Natural killer cell (primary cell): ENCODE measurements at regions of chr18 and their contacts with region 1.

Region 1: GRCh38 chr18:46073474-46074331 is 1.6 kb upstream of the PSTPIP2 start:
- DNase-seq: peak in 1 of 2 donors; percentile 85
- ATAC-seq: peak; percentile 54 to 58 (median 56)
- H3K4me3 ChIP-seq: no peak overlapping the region
- H3K4me3 Mint-ChIP-seq: peak overlapping the region; percentile 62
- H3K27ac ChIP-seq: no peak overlapping the region
- H3K27ac Mint-ChIP-seq: peak overlapping the region; percentile 13 to 61
- H3K4me1 ChIP-seq: peaks cover 34% of the 10 kb centered on the region
- H3K4me1 Mint-ChIP-seq: peaks cover 35 to 43% of the 10 kb centered on the region in 2 donors
- H3K27me3 ChIP-seq: peaks cover 2% of the 10 kb centered on the region
- H3K27me3 Mint-ChIP-seq: no peaks in the 10 kb centered on the region
- CTCF ChIP-seq: peak; percentile 79

Region 2: DNA sequence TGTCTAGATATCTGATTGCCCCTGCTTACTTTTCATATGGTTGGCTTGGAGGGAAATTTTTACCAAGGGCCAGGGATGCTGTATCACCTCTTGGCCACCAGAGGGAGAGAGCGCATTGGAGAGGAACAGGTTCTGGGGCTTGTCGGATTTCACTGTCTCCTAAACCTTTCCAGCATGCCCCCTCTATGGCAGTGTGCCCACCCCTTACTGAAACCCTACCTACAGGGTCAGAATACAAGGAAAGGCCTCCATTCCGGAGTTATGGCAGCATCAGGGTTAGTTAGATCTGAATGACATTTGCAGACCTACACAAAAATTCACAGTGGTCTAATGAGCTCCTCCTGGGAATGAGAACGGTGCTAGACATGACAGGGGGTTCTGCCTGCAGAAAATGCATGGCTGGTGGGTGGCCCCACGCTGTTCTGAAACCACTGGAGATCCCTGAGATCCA is 452.6 kb before region 1 on chr18:
- intact Hi-C with region 1: loop called (anchors 2 kb)
- DNase-seq: peak; percentile 18 to 69
- ATAC-seq: peak; percentile 61 to 84 (median 76)
- H3K4me3 ChIP-seq: no peak overlapping the region
- H3K4me3 Mint-ChIP-seq: no peak overlapping the region
- H3K27ac ChIP-seq: no peak overlapping the region
- H3K27ac Mint-ChIP-seq: no peak overlapping the region
- H3K4me1 ChIP-seq: no peaks in the 10 kb centered on the region
- H3K4me1 Mint-ChIP-seq: peaks cover 0 to 6% of the 10 kb centered on the region in 2 donors
- H3K27me3 ChIP-seq: no peaks in the 10 kb centered on the region
- H3K27me3 Mint-ChIP-seq: peaks cover 17 to 23% of the 10 kb centered on the region in 2 donors
- CTCF ChIP-seq: peak; percentile 94

Region 3: GRCh38 chr18:45910405-45911023 is 163.2 kb before region 1 on chr18:
- intact Hi-C with region 1: loop called (anchors 5 kb)
- DNase-seq: peak; percentile 44 to 75
- ATAC-seq: peak; percentile 82 to 94 (median 83)
- H3K4me3 ChIP-seq: no peak overlapping the region
- H3K4me3 Mint-ChIP-seq: no peak overlapping the region
- H3K27ac ChIP-seq: no peak overlapping the region
- H3K27ac Mint-ChIP-seq: peak overlapping the region in 1 of 2 donors; percentile 34
- H3K4me1 ChIP-seq: no peaks in the 10 kb centered on the region
- H3K4me1 Mint-ChIP-seq: peaks cover 0 to 5% of the 10 kb centered on the region in 2 donors
- H3K27me3 ChIP-seq: no peaks in the 10 kb centered on the region
- H3K27me3 Mint-ChIP-seq: no peaks in the 10 kb centered on the region
- CTCF ChIP-seq: peak; percentile 82

Region 4: GRCh38 chr18:45967007-45967706 is 106.5 kb before region 1 on chr18 and contains the start of gene EPG5:
- intact Hi-C with region 1: loop called (anchors 2 kb)
- DNase-seq: peak; percentile 89 to 94
- ATAC-seq: peak; percentile 82 to 95 (median 84)
- H3K4me3 ChIP-seq: peak within 1 kb of the TSS; percentile 79
- H3K4me3 Mint-ChIP-seq: peak within 1 kb of the TSS; percentile 99
- H3K27ac ChIP-seq: peak within 1 kb of the TSS; percentile 72
- H3K27ac Mint-ChIP-seq: peak within 1 kb of the TSS; percentile 93 to 97
- H3K4me1 ChIP-seq: peaks cover 16% of the 10 kb centered on the region
- H3K4me1 Mint-ChIP-seq: peaks cover 46% of the 10 kb centered on the region in 2 donors
- H3K27me3 ChIP-seq: no peaks in the 10 kb centered on the region
- H3K27me3 Mint-ChIP-seq: no peaks in the 10 kb centered on the region
- CTCF ChIP-seq: no peak
- total RNA-seq, gene EPG5: 81.3 to 133 (median 99.6) TPM

Region 5: DNA sequence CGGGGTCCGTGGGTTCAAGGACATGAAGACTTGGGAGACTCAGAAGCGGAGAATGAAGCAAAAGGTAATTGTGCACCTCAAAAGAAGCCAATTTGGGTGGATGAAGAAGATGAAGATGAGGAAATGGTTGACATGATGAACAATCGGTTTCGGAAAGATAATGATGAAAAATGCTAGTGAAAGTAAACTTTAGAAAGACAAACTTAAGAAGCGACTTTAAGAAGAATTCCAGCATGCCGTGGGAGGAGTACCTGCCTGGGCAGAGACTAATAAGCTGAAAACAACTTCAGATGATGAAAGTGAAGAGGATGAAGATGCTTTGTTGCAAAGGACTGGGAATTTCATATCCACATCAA is 45.2 kb before region 1 on chr18:
- intact Hi-C with region 1: loop called (anchors 2 kb)
- DNase-seq: no peak
- ATAC-seq: no peak
- H3K4me3 ChIP-seq: peak overlapping the region; percentile 75
- H3K4me3 Mint-ChIP-seq: peak overlapping the region; percentile 97
- H3K27ac ChIP-seq: no peak overlapping the region
- H3K27ac Mint-ChIP-seq: peak overlapping the region; percentile 83 to 87
- H3K4me1 ChIP-seq: peaks cover 14% of the 10 kb centered on the region
- H3K4me1 Mint-ChIP-seq: peaks cover 14 to 20% of the 10 kb centered on the region in 2 donors
- H3K27me3 ChIP-seq: peaks cover 2% of the 10 kb centered on the region
- H3K27me3 Mint-ChIP-seq: peaks cover 0 to 4% of the 10 kb centered on the region in 2 donors
- CTCF ChIP-seq: no peak

Region 6: DNA sequence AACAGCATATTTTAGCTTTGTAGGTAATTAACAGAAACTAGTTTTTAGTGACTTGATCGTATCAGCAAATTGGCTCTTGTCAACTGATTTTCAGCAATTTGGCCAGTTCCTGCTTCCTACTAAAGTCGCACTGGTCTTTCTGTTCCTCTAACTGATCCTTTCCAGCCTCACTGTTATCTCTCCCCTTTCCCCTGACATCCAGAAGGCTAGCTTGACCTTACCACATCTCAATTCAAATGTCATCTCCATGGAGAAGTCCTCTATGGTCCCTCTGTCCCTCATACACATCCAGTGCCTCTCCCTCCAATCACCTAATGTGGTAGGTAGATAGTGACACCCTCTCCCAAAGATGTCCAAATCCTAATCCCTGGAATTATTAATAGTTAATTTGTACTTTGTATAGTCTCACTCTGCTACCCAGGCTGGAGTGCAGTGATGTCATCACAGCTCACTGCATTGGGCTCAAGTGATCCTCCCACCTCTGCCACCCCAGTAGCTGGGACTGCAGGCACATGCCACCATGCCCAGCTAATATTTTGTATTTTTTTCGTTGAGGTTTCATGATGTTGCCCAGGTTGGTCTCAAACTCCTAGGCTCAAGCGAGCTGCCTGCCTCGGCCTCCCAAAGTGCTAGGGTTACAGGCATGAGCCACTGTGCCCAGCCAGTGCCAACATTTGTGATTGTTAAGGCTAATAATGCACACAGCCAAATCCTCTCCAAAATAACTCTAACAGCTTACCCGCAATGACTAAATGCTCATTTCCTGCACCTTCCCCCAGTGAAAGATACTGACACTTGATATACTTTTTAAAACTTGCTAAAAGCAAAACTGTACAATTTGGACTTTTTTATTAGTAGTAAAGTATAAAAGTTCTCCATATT is 18.5 kb before region 1 on chr18:
- intact Hi-C with region 1: loop called (anchors 2 kb)
- DNase-seq: peak; percentile 23 to 48
- ATAC-seq: peak; percentile 86 to 94 (median 92)
- H3K4me3 ChIP-seq: no peak overlapping the region
- H3K4me3 Mint-ChIP-seq: peak overlapping the region; percentile 83
- H3K27ac ChIP-seq: peak overlapping the region; percentile 88
- H3K27ac Mint-ChIP-seq: peak overlapping the region; percentile 89 to 97
- H3K4me1 ChIP-seq: peaks cover 22% of the 10 kb centered on the region
- H3K4me1 Mint-ChIP-seq: peaks cover 49 to 51% of the 10 kb centered on the region in 2 donors
- H3K27me3 ChIP-seq: no peaks in the 10 kb centered on the region
- H3K27me3 Mint-ChIP-seq: no peaks in the 10 kb centered on the region
- CTCF ChIP-seq: no peak